ENCODE measurements at regions of chr10 and their contacts with region 1.

Region 1: DNA sequence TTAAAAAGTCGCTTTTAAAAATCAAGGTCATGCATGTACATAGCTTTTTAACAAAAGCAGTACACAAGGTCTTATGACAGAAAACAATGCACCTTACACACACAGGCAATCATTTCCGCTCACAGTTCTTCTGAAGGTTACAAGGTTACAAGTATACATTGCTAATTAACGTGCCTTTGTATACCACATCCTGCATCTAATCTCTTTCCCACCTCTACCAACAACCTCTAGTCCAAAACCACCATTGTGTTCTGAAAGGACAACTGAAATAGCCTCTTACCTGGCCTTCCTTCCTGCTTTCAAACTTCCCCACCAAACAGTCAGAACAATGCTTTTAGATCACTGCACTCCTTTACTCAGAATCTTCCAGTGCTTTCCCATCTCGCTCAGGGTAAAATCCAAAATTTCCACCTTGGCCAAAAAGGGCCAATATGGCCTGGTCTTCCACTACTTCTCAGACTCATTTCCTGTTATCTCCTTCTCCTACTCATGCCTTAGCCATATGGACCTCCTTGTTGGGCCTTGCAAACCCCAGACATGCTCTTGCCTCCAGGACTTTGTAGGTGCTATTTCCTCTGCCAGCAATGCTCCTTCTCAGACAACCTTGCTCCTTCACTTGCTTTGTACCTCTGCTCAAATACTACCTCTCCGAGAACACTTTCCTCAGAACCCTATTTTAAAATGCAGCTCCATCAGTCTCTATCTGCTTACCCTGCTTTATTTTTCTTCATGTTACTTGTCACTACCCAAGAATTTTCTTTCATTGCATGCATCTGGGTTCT is 205.4 kb downstream of the DNAJC1 start:
- DNase-seq: peak in 6 of 35 experiments; percentile 2 to 39 (median 6)
- ATAC-seq: peak; percentile 78 to 92 (median 84)
- H3K4me3 ChIP-seq: no peak overlapping the region
- H3K4me3 Mint-ChIP-seq: peak overlapping the region in 1 of 3 donors; percentile 24
- H3K27ac ChIP-seq: peak overlapping the region; percentile 16
- H3K27ac Mint-ChIP-seq: peak overlapping the region; percentile 85
- H3K4me1 ChIP-seq: peaks cover 9 to 13% of the 10 kb centered on the region in 2 experiments
- H3K4me1 Mint-ChIP-seq: peaks cover 22 to 29% (median 25%) of the 10 kb centered on the region in 3 donors
- H3K27me3 ChIP-seq: no peaks in the 10 kb centered on the region
- H3K27me3 Mint-ChIP-seq: no peaks in the 10 kb centered on the region

Region 2: DNA sequence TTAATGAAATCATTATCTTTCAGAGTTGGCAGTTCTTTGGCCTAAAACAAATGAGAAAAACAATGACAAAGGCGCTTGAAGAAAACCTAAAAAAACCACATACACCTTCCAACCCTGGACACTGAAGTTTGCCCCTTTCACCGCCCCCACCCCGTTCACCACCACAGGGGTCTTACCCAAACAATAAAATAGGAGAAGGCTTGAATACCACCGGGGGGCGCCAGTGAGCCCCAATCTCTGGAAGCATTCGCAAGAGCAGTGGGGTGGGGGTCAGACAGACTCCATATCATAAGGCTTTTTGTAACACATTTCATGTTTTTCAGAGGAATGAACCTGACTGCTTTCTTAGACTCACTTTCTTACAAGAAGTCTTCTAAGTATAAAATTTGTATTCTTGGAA is 752.6 kb after region 1 on chr10:
- CTCF ChIA-PET with region 1: no interaction called
- POLR2A ChIA-PET with region 1: interaction called in 1 of 2 experiments, 14 read pairs
- DNase-seq: peak; percentile 27 to 81 (median 69)
- ATAC-seq: peak in 3 of 4 experiments; percentile 48 to 70 (median 52)
- H3K4me3 ChIP-seq: no peak overlapping the region
- H3K4me3 Mint-ChIP-seq: no peak overlapping the region
- H3K27ac ChIP-seq: no peak overlapping the region
- H3K27ac Mint-ChIP-seq: peak overlapping the region; percentile 52 to 74
- H3K4me1 ChIP-seq: peaks cover 0 to 3% of the 10 kb centered on the region in 2 experiments
- H3K4me1 Mint-ChIP-seq: peaks cover 14 to 24% (median 21%) of the 10 kb centered on the region in 3 donors
- H3K27me3 ChIP-seq: no peaks in the 10 kb centered on the region
- H3K27me3 Mint-ChIP-seq: no peaks in the 10 kb centered on the region

Measured in T-cell (primary cell).